CD8-positive, alpha-beta T cell (primary cell): ENCODE measurements at regions of chr7 and their contacts with region 1.

Region 1: DNA sequence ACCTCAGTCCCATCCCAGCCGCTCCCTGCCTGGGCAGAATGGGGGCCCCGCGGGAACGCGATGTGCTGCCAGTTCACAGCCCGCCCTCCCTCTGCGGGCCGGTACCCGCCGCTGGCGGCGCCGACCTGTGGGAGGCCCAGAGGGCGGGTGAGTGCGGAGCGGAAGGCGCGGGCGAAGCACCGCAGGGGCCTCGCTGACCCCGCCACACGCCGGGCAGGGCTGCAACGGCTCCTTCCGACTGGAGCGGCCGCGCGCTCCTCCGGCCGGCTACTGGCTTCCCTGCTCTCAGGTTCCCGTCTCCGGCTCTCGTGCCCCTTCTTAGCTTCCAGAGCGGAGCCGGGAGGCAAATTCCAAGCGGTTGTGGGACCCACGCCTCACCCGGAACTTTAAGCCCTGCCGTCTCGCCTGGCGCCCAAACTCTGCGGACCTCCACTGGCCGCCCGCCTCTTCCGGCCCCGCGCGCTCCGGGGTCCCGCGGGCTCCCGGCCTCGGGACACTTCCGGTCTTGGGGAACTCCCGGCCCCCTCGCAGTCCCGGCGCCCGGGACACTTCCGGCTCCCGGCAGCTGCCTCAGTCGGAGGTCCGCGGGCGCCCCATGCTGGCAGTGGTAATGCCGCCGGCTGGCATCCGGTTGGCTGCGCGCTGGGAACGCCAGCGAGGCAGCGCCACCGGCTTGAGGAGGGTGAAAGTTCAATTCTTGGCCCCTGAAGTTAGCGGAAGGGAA is at the start of gene CYREN:
- DNase-seq: peak; percentile 75 to 95 (median 91)
- ATAC-seq: peak; percentile 75
- H3K4me3 ChIP-seq: peak within 1 kb of the TSS; percentile 89 to 92
- H3K4me3 Mint-ChIP-seq: peak within 1 kb of the TSS; percentile 84
- H3K27ac ChIP-seq: peak within 1 kb of the TSS; percentile 94 to 98
- H3K27ac Mint-ChIP-seq: peak within 1 kb of the TSS; percentile 97
- H3K4me1 ChIP-seq: peaks cover 38% of the 10 kb centered on the region
- H3K4me1 Mint-ChIP-seq: peaks cover 47% of the 10 kb centered on the region
- H3K27me3 ChIP-seq: no peaks in the 10 kb centered on the region
- H3K27me3 Mint-ChIP-seq: no peaks in the 10 kb centered on the region
- CTCF ChIP-seq: peak; percentile 71
- total RNA-seq, gene CYREN: 14.0 to 15.2 TPM

Region 2: GRCh38 chr7:134701272-134701671 is 469.2 kb before region 1 on chr7:
- CTCF ChIA-PET with region 1: interaction called, 3 read pairs
- POLR2A ChIA-PET with region 1: no interaction called
- intact Hi-C with region 1: loop called in 1 of 2 experiments (anchors 1 kb)
- DNase-seq: peak in 7 of 9 experiments; percentile 4 to 67 (median 38)
- ATAC-seq: peak; percentile 62
- H3K4me3 ChIP-seq: no peak overlapping the region
- H3K4me3 Mint-ChIP-seq: no peak overlapping the region
- H3K27ac ChIP-seq: no peak overlapping the region
- H3K27ac Mint-ChIP-seq: no peak overlapping the region
- H3K4me1 ChIP-seq: no peaks in the 10 kb centered on the region
- H3K4me1 Mint-ChIP-seq: no peaks in the 10 kb centered on the region
- H3K27me3 ChIP-seq: no peaks in the 10 kb centered on the region
- H3K27me3 Mint-ChIP-seq: no peaks in the 10 kb centered on the region
- CTCF ChIP-seq: peak; percentile 32

Region 3: DNA sequence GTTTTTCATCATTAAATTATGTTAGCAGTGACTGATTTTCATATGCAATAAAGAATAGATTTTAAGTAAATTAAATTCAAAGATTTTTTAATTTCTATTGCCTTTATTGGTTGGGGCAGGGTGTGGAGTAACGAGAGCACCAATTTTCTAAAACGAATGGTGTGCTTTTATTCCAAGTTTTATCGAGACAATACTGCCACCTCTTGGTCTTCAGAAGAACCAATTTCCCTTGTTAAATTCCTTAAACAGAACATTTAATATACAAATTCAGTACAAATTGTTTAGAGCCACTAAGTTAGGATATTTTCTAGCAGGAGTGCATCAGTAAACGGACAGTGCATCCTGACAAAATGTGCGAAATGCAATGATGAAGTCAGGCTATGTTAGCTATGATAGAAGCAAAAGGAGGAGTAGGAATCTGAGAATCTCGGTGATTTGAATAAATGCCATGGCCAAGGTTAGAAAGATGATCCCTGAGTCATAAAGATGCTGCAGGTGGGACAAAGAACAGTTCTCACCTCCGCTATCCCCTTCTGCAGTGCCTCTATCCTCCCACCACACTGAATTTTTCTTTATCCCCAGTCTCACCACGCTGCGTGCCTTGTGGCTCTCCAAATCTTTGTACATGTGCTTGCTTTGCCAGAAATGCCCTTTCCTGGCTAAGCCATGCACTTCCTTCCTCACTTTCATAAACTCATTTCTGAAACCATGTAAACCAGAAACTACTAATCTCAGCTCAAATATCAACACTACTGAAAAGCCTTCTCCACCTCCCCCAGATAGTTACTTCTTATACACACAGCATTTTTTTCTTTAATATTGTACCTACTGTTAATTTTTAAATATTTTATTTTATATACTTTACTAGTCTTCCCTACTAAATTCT is 216.0 kb before region 1 on chr7:
- CTCF ChIA-PET with region 1: interaction called, 5 read pairs
- POLR2A ChIA-PET with region 1: no interaction called
- intact Hi-C with region 1: loop called (anchors 1 to 2 kb)
- DNase-seq: peak in 2 of 9 experiments; percentile 43 to 64
- ATAC-seq: no peak
- H3K4me3 ChIP-seq: no peak overlapping the region
- H3K4me3 Mint-ChIP-seq: no peak overlapping the region
- H3K27ac ChIP-seq: no peak overlapping the region
- H3K27ac Mint-ChIP-seq: no peak overlapping the region
- H3K4me1 ChIP-seq: no peaks in the 10 kb centered on the region
- H3K4me1 Mint-ChIP-seq: no peaks in the 10 kb centered on the region
- H3K27me3 ChIP-seq: no peaks in the 10 kb centered on the region
- H3K27me3 Mint-ChIP-seq: peaks cover 2% of the 10 kb centered on the region
- CTCF ChIP-seq: peak; percentile 74

Region 4: GRCh38 chr7:134992626-134993179 is 177.7 kb before region 1 on chr7:
- CTCF ChIA-PET with region 1: interaction called, 43 read pairs
- POLR2A ChIA-PET with region 1: interaction called, 50 read pairs
- intact Hi-C with region 1: loop called in 1 of 2 experiments (anchors 2 kb)
- DNase-seq: peak in 5 of 9 experiments; percentile 13 to 66 (median 41)
- ATAC-seq: peak; percentile 58
- H3K4me3 ChIP-seq: peak overlapping the region in 1 of 2 experiments; percentile 11
- H3K4me3 Mint-ChIP-seq: peak overlapping the region; percentile 59
- H3K27ac ChIP-seq: peak overlapping the region; percentile 49 to 58
- H3K27ac Mint-ChIP-seq: peak overlapping the region; percentile 91
- H3K4me1 ChIP-seq: peaks cover 83% of the 10 kb centered on the region
- H3K4me1 Mint-ChIP-seq: peaks cover 81% of the 10 kb centered on the region
- H3K27me3 ChIP-seq: no peaks in the 10 kb centered on the region
- H3K27me3 Mint-ChIP-seq: no peaks in the 10 kb centered on the region
- CTCF ChIP-seq: no peak

Region 5: GRCh38 chr7:135147899-135148721 is 22.3 kb before region 1 on chr7 and contains the start of gene TMEM140:
- CTCF ChIA-PET with region 1: interaction called, 25 read pairs
- POLR2A ChIA-PET with region 1: interaction called, 70 read pairs
- intact Hi-C with region 1: loop called (anchors 1 kb)
- DNase-seq: peak; percentile 36 to 91 (median 63)
- ATAC-seq: peak; percentile 78
- H3K4me3 ChIP-seq: peak within 1 kb of the TSS; percentile 60 to 70
- H3K4me3 Mint-ChIP-seq: peak within 1 kb of the TSS; percentile 87
- H3K27ac ChIP-seq: peak within 1 kb of the TSS; percentile 92 to 97
- H3K27ac Mint-ChIP-seq: peak within 1 kb of the TSS; percentile 97
- H3K4me1 ChIP-seq: peaks cover 47% of the 10 kb centered on the region
- H3K4me1 Mint-ChIP-seq: peaks cover 80% of the 10 kb centered on the region
- H3K27me3 ChIP-seq: no peaks in the 10 kb centered on the region
- H3K27me3 Mint-ChIP-seq: no peaks in the 10 kb centered on the region
- CTCF ChIP-seq: no peak
- total RNA-seq, gene TMEM140: 18.8 to 21.8 TPM

Region 6: GRCh38 chr7:135160098-135160857 is 10.2 kb before region 1 on chr7:
- CTCF ChIA-PET with region 1: interaction called, 14 read pairs
- POLR2A ChIA-PET with region 1: interaction called, 5 read pairs
- intact Hi-C with region 1: no loop called
- DNase-seq: peak in 1 of 9 experiments; percentile 36
- ATAC-seq: no peak
- H3K4me3 ChIP-seq: no peak overlapping the region
- H3K4me3 Mint-ChIP-seq: no peak overlapping the region
- H3K27ac ChIP-seq: peak overlapping the region in 1 of 2 experiments; percentile 53
- H3K27ac Mint-ChIP-seq: peak overlapping the region; percentile 72
- H3K4me1 ChIP-seq: peaks cover 27% of the 10 kb centered on the region
- H3K4me1 Mint-ChIP-seq: peaks cover 64% of the 10 kb centered on the region
- H3K27me3 ChIP-seq: no peaks in the 10 kb centered on the region
- H3K27me3 Mint-ChIP-seq: no peaks in the 10 kb centered on the region
- CTCF ChIP-seq: no peak